CD4-positive, alpha-beta T cell (primary cell): ENCODE measurements at regions of chr11 and their contacts with region 1.

Region 1: DNA sequence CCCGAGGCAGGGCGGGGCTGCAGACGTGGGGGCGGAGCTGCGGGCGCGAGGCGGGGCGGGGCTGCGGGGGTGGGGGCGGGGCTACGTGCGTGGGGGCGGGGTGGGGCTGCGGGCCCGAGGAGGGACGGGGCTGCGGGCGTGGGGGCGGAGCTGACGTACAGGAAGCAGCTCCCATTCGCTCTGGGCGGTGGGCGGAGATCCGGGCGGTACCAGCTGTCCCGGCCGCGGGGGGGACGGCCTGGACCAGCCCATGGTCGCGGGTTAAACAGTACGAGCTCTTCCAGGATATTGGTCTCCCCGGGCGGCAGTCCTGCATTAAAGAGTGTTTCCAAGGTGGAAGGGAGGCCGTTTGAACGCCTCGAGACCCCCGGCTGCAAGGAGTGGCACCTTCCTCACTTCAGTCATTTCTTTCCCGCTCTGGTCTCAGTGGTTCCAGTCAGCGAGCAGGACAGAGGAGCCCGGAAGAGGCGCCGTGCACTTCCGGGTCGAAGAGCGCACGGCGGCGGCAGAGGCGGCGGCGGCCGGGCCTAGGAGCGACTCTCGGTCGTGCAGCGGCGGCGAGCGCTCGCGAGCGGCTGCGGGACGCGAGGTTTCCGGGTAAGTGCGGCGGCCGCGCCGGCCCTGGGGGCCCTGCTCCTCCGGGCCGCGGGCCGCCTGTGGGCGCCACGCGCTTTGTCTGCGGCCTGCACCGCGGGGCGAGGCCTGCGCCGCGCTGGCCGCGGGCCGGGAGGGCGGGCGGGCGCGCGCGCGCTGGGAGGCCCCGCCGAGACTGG is at the start of gene PHRF1:
- DNase-seq: peak; percentile 91 to 98 (median 96)
- ATAC-seq: peak; percentile 90
- H3K4me3 ChIP-seq: peak within 1 kb of the TSS; percentile 87
- H3K4me3 Mint-ChIP-seq: peak within 1 kb of the TSS; percentile 95
- H3K27ac ChIP-seq: peak within 1 kb of the TSS; percentile 87 to 98
- H3K27ac Mint-ChIP-seq: peak within 1 kb of the TSS; percentile 92
- H3K4me1 ChIP-seq: peaks cover 56% of the 10 kb centered on the region
- H3K4me1 Mint-ChIP-seq: peaks cover 48% of the 10 kb centered on the region
- H3K27me3 ChIP-seq: no peaks in the 10 kb centered on the region
- H3K27me3 Mint-ChIP-seq: peaks cover 4% of the 10 kb centered on the region
- CTCF ChIP-seq: no peak
- total RNA-seq, gene PHRF1: 37.1 to 37.6 TPM

Region 2: GRCh38 chr11:535519-536454 is 40.4 kb before region 1 on chr11 and contains the start of gene HRAS:
- CTCF ChIA-PET with region 1: no interaction called
- POLR2A ChIA-PET with region 1: interaction called, 18 read pairs
- intact Hi-C with region 1: loop called in 1 of 2 experiments (anchors 2 kb)
- DNase-seq: peak; percentile 89 to 99 (median 96)
- ATAC-seq: peak; percentile 90
- H3K4me3 ChIP-seq: peak within 1 kb of the TSS; percentile 71
- H3K4me3 Mint-ChIP-seq: peak within 1 kb of the TSS; percentile 98
- H3K27ac ChIP-seq: peak within 1 kb of the TSS; percentile 73 to 79
- H3K27ac Mint-ChIP-seq: peak within 1 kb of the TSS; percentile 93
- H3K4me1 ChIP-seq: peaks cover 44% of the 10 kb centered on the region
- H3K4me1 Mint-ChIP-seq: peaks cover 16% of the 10 kb centered on the region
- H3K27me3 ChIP-seq: no peaks in the 10 kb centered on the region
- H3K27me3 Mint-ChIP-seq: no peaks in the 10 kb centered on the region
- CTCF ChIP-seq: no peak
- total RNA-seq, gene HRAS: 23.7 to 23.9 TPM

Region 3: GRCh38 chr11:560305-561147 is 15.7 kb before region 1 on chr11 and contains the starts of genes LMNTD2 and RASSF7:
- CTCF ChIA-PET with region 1: interaction called, 5 read pairs
- POLR2A ChIA-PET with region 1: interaction called, 25 read pairs
- intact Hi-C with region 1: loop called (anchors 1 to 2 kb)
- DNase-seq: peak; percentile 93 to 98 (median 96)
- ATAC-seq: peak; percentile 92
- H3K4me3 ChIP-seq: peak within 1 kb of the TSS; percentile 60
- H3K4me3 Mint-ChIP-seq: peak within 1 kb of the TSS; percentile 93
- H3K27ac ChIP-seq: peak within 1 kb of the TSS; percentile 39 to 78
- H3K27ac Mint-ChIP-seq: peak within 1 kb of the TSS; percentile 88
- H3K4me1 ChIP-seq: peaks cover 39% of the 10 kb centered on the region
- H3K4me1 Mint-ChIP-seq: peaks cover 13% of the 10 kb centered on the region
- H3K27me3 ChIP-seq: no peaks in the 10 kb centered on the region
- H3K27me3 Mint-ChIP-seq: no peaks in the 10 kb centered on the region
- CTCF ChIP-seq: no peak
- total RNA-seq, gene LMNTD2: 8.2 to 10.3 TPM
- total RNA-seq, gene RASSF7: 14.1 to 15.7 TPM

Region 4: DNA sequence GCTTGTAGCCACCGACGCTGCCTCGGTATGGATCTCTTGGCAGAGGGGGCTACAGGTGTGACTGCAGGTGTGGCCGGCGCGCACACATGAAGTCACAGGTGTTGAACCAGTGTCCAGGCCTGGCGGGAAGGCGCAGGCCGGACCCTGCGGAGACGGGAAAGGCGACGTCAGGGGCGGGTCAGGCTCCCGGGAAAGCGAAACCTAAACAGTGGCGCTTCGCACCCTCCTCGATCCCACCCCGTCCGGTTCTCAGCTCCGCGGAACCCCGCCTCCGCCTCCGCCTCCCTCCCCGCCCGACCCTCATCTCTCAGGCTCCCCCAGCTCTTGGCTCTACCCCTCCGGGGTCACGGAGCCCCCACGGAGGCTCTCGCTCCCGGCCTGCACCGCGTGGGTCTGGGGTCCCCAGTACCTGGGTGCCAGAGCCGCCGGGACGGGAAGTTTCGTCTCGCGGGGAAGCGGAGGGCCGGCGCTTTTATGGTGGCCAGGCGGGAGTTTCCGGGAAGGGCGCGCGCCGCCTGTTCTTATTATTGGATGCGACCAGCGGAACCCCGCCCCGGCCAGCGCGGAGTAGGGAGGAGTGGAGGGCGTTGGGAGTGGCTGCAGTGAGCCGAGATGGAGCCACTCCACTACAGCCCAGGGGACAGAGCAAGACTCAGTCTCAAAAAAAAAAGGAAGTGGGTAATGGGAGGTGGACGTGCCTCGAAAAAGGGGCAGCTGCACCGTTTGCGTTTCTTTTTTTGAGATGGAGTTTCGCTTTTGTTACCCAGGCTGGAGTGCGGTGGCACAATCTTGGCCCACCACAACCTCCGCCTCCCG is 39.5 kb after region 1 on chr11 and contains the start of gene IRF7:
- CTCF ChIA-PET with region 1: interaction called, 4 read pairs
- POLR2A ChIA-PET with region 1: interaction called, 9 read pairs
- intact Hi-C with region 1: loop called in 1 of 2 experiments (anchors 1 kb)
- DNase-seq: peak; percentile 67 to 93 (median 86)
- ATAC-seq: peak; percentile 65
- H3K4me3 ChIP-seq: peak within 1 kb of the TSS; percentile 97
- H3K4me3 Mint-ChIP-seq: peak within 1 kb of the TSS; percentile 96
- H3K27ac ChIP-seq: peak within 1 kb of the TSS; percentile 83 to 95
- H3K27ac Mint-ChIP-seq: peak within 1 kb of the TSS; percentile 89
- H3K4me1 ChIP-seq: peaks cover 34% of the 10 kb centered on the region
- H3K4me1 Mint-ChIP-seq: peaks cover 16% of the 10 kb centered on the region
- H3K27me3 ChIP-seq: no peaks in the 10 kb centered on the region
- H3K27me3 Mint-ChIP-seq: no peaks in the 10 kb centered on the region
- CTCF ChIP-seq: no peak
- total RNA-seq, gene IRF7: 36.5 to 37.7 TPM